Mammary epithelial cell (primary cell): ENCODE measurements at regions of chr12 and their contacts with region 1.

Region 1: GRCh38 chr12:117994551-117995438 is 21.7 kb upstream of the RFC5 start:
- DNase-seq: no peak
- H3K4me3 ChIP-seq: no peak overlapping the region
- H3K27ac ChIP-seq: no peak overlapping the region
- H3K4me1 ChIP-seq: no peaks in the 10 kb centered on the region
- H3K27me3 ChIP-seq: no peaks in the 10 kb centered on the region
- CTCF ChIP-seq: no peak

Region 2: DNA sequence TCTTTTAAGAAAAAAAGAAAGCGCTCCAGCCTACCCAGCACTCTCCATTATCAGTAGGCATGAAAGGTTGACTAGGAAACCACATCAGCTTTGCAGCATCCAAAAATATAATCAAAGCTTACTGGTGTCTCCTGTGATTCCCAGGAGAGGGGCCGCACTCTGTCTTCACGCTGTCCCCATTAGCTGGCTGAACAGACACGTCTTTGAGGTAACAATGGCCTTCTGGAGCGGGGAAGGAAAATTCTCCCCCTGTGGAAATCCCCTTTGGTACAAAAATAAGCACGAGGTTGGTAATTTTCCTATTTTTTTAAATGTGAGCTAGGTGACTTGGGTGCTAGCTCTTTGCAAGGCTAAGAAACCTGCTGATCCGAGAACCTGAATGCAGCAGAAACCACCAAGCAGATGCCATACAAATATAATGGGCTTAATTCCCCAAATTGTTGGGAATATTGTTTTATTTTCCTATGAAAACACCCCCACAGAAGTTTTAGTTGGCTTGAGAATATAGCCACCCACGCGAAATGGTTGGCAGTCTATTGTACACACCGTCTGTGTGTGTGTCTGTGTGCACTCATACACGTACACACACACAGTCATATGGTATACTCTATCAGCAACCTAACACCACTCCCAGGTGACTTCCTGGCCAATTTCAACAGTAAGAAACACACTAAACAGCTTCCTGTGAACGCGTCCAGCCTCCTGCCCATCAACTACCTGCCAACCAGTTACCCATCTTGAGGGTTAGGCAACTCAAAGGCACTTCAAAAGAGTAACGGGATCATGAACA is 97.2 kb before region 1 on chr12:
- CTCF ChIA-PET with region 1: no interaction called
- dilution Hi-C with region 1: loop called (anchors 5 kb)
- in situ Hi-C with region 1: no loop called
- intact Hi-C with region 1: no loop called
- DNase-seq: no peak
- H3K4me3 ChIP-seq: no peak overlapping the region
- H3K27ac ChIP-seq: no peak overlapping the region
- H3K4me1 ChIP-seq: no peaks in the 10 kb centered on the region
- H3K27me3 ChIP-seq: no peaks in the 10 kb centered on the region
- CTCF ChIP-seq: no peak

Region 3: DNA sequence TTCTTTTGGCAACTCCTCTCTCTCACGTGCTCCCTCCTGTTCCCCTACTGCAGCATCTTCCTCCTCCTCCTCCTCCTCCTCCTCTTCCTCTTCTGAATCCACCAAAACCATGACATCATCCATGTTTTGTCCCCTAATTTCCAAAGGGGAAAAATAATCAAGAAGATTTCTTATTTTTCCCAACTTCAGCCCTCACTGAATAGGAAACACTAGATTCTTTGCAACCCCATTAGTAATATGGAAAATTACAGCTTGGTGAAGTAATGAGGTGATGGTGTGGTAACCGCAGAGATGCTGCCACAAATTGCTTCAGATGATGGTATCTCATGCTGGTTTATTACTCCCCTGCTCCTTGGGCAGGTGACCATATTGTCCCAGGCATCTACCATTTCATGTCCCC is 73.7 kb after region 1 on chr12:
- CTCF ChIA-PET with region 1: no interaction called
- dilution Hi-C with region 1: no loop called
- in situ Hi-C with region 1: no loop called
- intact Hi-C with region 1: loop called (anchors 2 kb)
- DNase-seq: no peak
- H3K4me3 ChIP-seq: no peak overlapping the region
- H3K27ac ChIP-seq: no peak overlapping the region
- H3K4me1 ChIP-seq: no peaks in the 10 kb centered on the region
- H3K27me3 ChIP-seq: no peaks in the 10 kb centered on the region
- CTCF ChIP-seq: no peak

Region 4: DNA sequence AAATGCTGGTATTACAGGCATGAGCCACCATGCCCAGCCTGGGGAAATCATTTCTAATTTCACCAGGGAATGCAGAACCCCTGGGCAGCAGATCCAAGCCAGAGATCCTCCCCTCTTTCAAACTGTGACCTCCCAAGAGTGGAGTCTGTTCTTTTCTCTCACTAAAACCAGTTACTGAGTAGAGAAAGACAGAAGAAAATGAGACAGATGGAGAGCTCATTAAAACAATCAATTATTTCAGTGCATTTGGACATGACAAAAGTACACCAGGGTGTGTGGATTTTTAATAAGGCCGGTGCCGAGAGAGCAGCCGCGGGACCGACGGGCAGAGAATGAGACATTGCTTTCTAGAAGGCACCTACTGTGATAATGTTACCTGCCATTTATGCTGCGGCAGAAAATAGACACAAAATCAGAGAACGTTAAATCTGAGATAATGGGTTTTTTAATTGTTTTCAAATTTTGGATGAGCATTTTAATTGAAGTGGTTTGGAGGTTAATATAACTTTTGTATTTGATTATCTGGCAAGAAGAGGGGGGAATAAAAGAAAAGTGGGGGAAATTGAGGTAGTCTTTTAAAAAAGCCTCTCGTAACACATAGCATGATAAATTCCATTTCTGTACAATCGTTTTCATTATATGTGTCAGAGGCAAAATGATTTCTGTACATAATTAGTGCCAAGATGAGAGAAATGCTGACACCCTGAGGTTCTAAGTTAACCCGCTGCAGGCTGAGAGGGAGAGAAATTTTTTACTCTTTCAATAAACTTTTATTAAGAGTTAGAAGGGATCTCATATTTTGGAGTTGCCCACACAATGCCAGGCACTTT is 1254.7 kb after region 1 on chr12:
- CTCF ChIA-PET with region 1: no interaction called
- dilution Hi-C with region 1: no loop called
- in situ Hi-C with region 1: no loop called
- intact Hi-C with region 1: no loop called
- DNase-seq: no peak
- H3K4me3 ChIP-seq: no peak overlapping the region
- H3K27ac ChIP-seq: no peak overlapping the region
- H3K4me1 ChIP-seq: no peaks in the 10 kb centered on the region
- H3K27me3 ChIP-seq: no peaks in the 10 kb centered on the region
- CTCF ChIP-seq: no peak